ENCODE measurements at regions of chr19 and their contacts with region 1.

Region 1: DNA sequence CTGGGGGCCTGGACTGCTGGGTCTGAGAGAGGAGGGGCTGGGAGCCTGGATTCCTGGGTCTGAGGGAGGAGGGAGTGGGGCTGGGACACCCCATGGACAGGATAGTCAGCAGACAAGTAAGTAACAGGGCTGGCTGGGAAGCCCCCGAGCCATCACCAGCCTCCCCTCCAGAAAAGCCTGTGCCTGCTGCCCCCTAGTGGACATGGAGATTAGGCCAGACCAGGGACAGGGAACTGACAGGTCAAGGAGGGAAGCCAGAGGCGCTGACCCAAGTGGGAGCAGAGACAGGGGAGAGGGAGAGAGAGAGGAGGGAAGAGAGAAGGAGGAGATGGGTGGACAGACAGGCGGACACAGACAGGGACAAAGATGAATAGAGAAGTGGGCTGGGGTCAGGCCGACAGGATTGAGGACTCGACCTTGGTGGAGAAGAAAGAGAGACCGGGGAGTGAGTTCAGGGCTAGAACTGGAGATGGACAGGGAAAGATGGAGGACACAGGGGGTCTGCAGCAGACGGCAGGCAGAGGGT is 6.7 kb upstream of the ERFL start:
- DNase-seq: no peak
- ATAC-seq: peak; percentile 93
- H3K4me3 ChIP-seq: no peak overlapping the region
- H3K27ac ChIP-seq: no peak overlapping the region
- H3K4me1 ChIP-seq: peaks cover 23% of the 10 kb centered on the region
- H3K27me3 ChIP-seq: peaks cover 0 to 6% of the 10 kb centered on the region in 2 experiments
- CTCF ChIP-seq: peak; percentile 92 to 97 (median 94); a peak in 5 of 6 replicates
- EP300 ChIP-seq: no peak
- POLR2A ChIP-seq: no peak
- RAD21 ChIP-seq: peak; percentile 94

Region 2: DNA sequence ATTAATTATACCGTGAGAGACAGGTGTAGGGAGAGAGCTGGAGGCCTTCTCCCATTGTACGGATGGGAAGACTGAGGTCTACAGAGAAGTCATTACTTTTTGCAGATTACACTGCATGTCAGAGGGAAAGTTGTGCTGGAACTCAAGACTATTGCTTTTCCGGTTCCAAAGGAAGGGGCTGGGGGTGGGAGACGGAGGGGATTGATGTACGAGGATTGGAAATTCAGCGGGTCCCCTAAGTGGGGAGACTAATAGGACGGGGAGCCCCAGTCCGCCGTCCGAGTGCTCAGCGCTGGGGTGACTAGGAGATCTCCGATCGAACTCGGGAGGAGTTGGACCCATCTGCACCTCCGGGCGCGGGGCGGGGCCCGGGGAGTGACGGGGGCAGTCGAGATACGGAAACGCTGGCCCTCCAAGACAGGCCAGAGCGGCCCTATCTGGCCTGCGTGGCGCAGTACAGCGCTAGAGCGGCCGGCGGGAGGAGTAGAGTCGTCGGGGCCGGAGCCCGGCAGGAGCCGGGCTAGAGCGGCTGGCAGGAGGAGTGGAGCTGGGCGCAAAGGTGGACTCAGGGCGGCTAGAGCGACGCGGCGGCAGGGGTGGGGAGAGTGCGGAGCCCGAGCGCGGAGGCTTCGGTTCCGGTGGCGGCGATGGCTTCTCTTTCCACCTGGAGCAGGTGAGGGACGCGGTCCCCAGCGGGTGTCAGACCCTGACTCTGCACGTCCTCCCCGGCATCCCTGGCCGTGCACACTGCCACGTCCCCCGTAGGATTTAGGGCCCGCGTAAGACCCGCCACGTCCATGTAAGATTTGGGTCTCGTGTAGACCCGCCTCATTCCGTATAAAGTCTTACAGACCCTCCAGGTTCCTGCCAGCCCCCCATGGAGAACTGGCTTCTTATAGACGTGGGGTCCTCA is 50.8 kb before region 1 on chr19:
- CTCF ChIA-PET with region 1: interaction called, 11 read pairs
- POLR2A ChIA-PET with region 1: no interaction called
- RAD21 ChIA-PET with region 1: no interaction called
- SMC1A ChIA-PET with region 1: interaction called, 3 read pairs
- in situ Hi-C with region 1: no loop called
- intact Hi-C with region 1: loop called (anchors 2 kb)
- DNase-seq: peak; percentile 86
- ATAC-seq: peak; percentile 87
- H3K4me3 ChIP-seq: peak overlapping the region; percentile 89
- H3K27ac ChIP-seq: peak overlapping the region; percentile 87
- H3K4me1 ChIP-seq: peaks cover 30% of the 10 kb centered on the region
- H3K27me3 ChIP-seq: no peaks in the 10 kb centered on the region
- CTCF ChIP-seq: 0 out of 6 replicates have a peak, but pooled peaks of 1 of the 3 experiments have one; percentile 7
- EP300 ChIP-seq: no peak; a peak in 1 of 4 replicates
- POLR2A ChIP-seq: peak; percentile 92
- RAD21 ChIP-seq: no peak

Region 3: GRCh38 chr19:41951686-41952172 is 16.8 kb after region 1 on chr19:
- CTCF ChIA-PET with region 1: interaction called, 3 read pairs
- POLR2A ChIA-PET with region 1: interaction called, 3 read pairs
- RAD21 ChIA-PET with region 1: no interaction called
- SMC1A ChIA-PET with region 1: interaction called, 4 read pairs
- in situ Hi-C with region 1: no loop called
- intact Hi-C with region 1: loop called (anchors 2 kb)
- DNase-seq: no peak
- ATAC-seq: peak; percentile 96
- H3K4me3 ChIP-seq: no peak overlapping the region
- H3K27ac ChIP-seq: no peak overlapping the region
- H3K4me1 ChIP-seq: peaks cover 8% of the 10 kb centered on the region
- H3K27me3 ChIP-seq: no peaks in the 10 kb centered on the region
- CTCF ChIP-seq: peak; percentile 96 to 99 (median 97)
- EP300 ChIP-seq: no peak
- POLR2A ChIP-seq: no peak
- RAD21 ChIP-seq: peak; percentile 97

Measured in GM12878 (cell line).